Tibial artery (tissue), 4 donors: ENCODE measurements at regions of chr9 and their contacts with region 1.

Region 1: DNA sequence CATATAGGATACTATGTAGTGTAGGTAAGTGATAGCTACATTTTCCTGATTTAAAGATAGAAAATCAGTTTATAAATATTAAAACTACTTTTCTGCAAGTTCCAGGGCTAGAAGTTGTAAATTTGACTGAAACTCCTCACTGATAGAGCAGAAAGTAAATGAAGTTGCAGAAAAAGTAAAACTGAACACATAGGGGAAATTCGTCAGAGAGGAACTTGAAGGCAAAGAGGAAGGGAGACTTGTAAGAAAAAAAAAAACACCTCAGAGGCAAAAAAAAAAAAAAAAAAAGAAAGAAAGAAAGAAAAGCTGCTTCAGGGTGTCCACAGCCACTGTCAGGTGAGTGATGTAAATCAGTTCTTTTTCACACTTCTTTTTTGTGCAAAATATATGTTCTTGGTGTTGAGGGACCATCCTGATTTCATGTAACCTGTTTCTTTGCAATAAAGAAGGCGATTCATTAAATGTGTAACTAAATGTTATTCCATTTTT is 336.2 kb upstream of the ZNF462 start:
- DNase-seq: no peak
- H3K4me3 ChIP-seq: no peak overlapping the region
- H3K27ac ChIP-seq: no peak overlapping the region
- H3K4me1 ChIP-seq: no peaks in the 10 kb centered on the region
- H3K27me3 ChIP-seq: no peaks in the 10 kb centered on the region
- CTCF ChIP-seq: no peak

Region 2: DNA sequence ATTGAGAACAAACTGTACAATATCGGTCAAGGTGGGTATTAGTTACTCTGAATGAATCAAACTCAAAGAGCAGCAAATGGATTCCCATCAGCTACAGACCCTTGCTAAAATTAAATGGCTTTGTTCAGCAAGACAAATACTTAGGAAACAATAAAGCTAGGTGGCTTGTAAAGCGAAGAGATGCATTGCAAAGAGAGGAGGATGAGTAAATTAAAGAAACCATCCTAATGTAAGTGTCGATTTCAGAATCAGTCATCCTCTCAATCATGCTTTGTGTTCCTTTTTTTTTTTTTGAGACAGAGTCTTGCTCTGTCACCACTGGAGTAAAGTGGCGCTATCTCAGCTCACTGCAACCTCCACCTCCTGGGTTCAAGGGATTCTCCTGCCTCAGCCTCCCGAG is 23.0 kb before region 1 on chr9:
- intact Hi-C with region 1: loop called (anchors 2 kb)
- DNase-seq: no peak
- H3K4me3 ChIP-seq: no peak overlapping the region
- H3K27ac ChIP-seq: no peak overlapping the region
- H3K4me1 ChIP-seq: no peaks in the 10 kb centered on the region
- H3K27me3 ChIP-seq: no peaks in the 10 kb centered on the region
- CTCF ChIP-seq: no peak